Transverse colon (tissue), 4 donors: ENCODE measurements at regions of chr3 and their contacts with region 1.

Region 1: GRCh38 chr3:105195260-105195659 is 171.4 kb upstream of the ALCAM start:
- DNase-seq: no peak
- H3K4me3 ChIP-seq: no peak overlapping the region
- H3K27ac ChIP-seq: no peak overlapping the region
- H3K4me1 ChIP-seq: no peaks in the 10 kb centered on the region
- H3K27me3 ChIP-seq: no peaks in the 10 kb centered on the region
- CTCF ChIP-seq: no peak
- EP300 ChIP-seq: no peak
- POLR2A ChIP-seq: no peak

Region 2: GRCh38 chr3:105062853-105063252 is 132.4 kb before region 1 on chr3:
- in situ Hi-C with region 1: no loop called
- intact Hi-C with region 1: no loop called
- DNase-seq: no peak
- H3K4me3 ChIP-seq: no peak overlapping the region
- H3K27ac ChIP-seq: no peak overlapping the region
- H3K4me1 ChIP-seq: no peaks in the 10 kb centered on the region
- H3K27me3 ChIP-seq: no peaks in the 10 kb centered on the region
- CTCF ChIP-seq: no peak
- EP300 ChIP-seq: no peak
- POLR2A ChIP-seq: no peak

Region 3: DNA sequence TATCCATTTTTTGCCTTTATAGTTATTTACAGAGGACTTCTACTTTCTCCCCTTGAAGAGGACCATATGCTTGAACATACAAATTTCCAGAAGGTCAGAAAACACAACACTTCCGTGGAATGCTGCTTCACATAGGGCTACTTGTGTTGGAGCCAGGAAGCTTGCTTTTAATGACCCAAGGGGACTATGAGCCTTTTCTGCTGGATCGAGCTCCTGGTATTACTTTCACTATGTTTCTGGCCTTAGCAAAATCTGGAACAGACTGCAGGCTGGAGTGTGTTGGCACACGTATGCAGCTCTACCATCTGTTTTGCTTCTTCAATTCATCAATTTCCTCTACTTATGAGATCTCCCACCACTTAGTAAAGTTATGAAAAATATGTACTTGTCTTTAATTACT is 742.8 kb after region 1 on chr3:
- in situ Hi-C with region 1: no loop called
- intact Hi-C with region 1: loop called (anchors 5 kb)
- DNase-seq: no peak
- H3K4me3 ChIP-seq: no peak overlapping the region
- H3K27ac ChIP-seq: no peak overlapping the region
- H3K4me1 ChIP-seq: peaks cover 0 to 8% (median 0%) of the 10 kb centered on the region in 4 donors
- H3K27me3 ChIP-seq: no peaks in the 10 kb centered on the region
- CTCF ChIP-seq: no peak
- EP300 ChIP-seq: no peak
- POLR2A ChIP-seq: no peak